Prostate gland (tissue), 2 donors: ENCODE measurements at regions of chr16 and their contacts with region 1.

Region 1: GRCh38 chr16:49698931-49699840 is 156.7 kb downstream of the ZNF423 start:
- DNase-seq: no peak
- H3K4me3 ChIP-seq: no peak overlapping the region
- H3K27ac ChIP-seq: peak overlapping the region; percentile 8 to 62
- H3K4me1 ChIP-seq: no peaks in the 10 kb centered on the region
- H3K27me3 ChIP-seq: no peaks in the 10 kb centered on the region
- CTCF ChIP-seq: no peak
- POLR2A ChIP-seq: no peak

Region 2: GRCh38 chr16:49734331-49734730 is 35.1 kb after region 1 on chr16:
- intact Hi-C with region 1: loop called (anchors 2 kb)
- DNase-seq: no peak
- H3K4me3 ChIP-seq: no peak overlapping the region
- H3K27ac ChIP-seq: peak overlapping the region in 1 of 2 donors; percentile 38
- H3K4me1 ChIP-seq: no peaks in the 10 kb centered on the region
- H3K27me3 ChIP-seq: no peaks in the 10 kb centered on the region
- CTCF ChIP-seq: no peak
- POLR2A ChIP-seq: no peak